ENCODE measurements at regions of chr18 and their contacts with region 1.

Region 1: DNA sequence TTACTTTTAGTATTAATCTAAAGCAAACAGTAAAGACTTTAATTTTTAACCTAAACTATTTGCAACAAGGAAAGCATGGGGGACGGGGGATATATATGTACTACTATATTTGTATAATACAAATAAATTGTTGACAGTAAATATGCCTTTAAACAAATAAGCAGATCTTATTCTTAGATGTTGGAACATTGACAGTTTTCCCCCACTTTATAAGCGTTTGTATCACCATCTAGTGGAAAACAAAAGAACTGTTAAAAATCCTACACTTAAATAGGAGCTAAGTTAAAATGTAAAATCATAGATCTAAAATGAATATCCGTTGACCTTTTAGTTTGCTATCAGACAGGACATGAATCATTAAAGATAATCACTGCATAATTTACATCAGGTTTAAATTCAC is 50.0 kb downstream of the RBBP8 start:
- DNase-seq: no peak
- H3K4me3 ChIP-seq: no peak overlapping the region
- H3K27ac ChIP-seq: no peak overlapping the region
- H3K27me3 ChIP-seq: no peaks in the 10 kb centered on the region
- CTCF ChIP-seq: peak; percentile 36 to 78 (median 60)

Region 2: DNA sequence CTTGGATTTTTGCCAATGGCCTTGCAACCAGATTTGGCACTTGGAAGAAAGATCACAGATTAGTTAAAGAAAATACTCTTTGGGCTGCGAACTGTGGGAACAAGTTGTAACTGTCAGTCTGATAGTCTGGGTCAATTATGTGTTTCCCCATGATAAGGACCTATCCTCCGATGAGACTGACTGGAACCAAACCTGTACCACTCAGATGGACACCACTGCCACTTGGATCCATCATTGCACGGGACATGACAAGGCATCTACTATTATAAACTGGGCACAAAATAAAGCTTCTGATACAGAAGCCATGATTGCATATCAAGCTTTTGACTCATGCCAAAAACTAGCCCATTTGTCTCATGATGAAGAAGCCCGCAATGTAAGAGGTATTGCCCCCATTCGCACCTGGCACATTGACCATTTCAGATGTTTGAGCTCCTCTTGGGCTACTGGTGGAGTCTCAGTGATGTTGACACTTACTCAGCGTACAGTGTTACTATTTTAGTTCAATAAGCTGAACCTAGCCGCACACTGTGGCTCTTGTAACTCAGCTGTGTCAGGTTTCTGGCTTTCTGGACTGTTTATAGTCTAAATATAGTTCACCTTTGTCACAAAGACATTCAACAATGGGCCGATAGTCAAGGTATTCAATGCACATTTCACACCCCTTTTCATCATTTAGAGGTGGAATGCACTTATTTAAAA is 229.9 kb before region 1 on chr18:
- intact Hi-C with region 1: no loop called
- DNase-seq: no peak
- H3K4me3 ChIP-seq: no peak overlapping the region
- H3K27ac ChIP-seq: no peak overlapping the region
- H3K27me3 ChIP-seq: peaks cover 0 to 3% (median 0%) of the 10 kb centered on the region in 45 donors
- CTCF ChIP-seq: no peak

Region 3: DNA sequence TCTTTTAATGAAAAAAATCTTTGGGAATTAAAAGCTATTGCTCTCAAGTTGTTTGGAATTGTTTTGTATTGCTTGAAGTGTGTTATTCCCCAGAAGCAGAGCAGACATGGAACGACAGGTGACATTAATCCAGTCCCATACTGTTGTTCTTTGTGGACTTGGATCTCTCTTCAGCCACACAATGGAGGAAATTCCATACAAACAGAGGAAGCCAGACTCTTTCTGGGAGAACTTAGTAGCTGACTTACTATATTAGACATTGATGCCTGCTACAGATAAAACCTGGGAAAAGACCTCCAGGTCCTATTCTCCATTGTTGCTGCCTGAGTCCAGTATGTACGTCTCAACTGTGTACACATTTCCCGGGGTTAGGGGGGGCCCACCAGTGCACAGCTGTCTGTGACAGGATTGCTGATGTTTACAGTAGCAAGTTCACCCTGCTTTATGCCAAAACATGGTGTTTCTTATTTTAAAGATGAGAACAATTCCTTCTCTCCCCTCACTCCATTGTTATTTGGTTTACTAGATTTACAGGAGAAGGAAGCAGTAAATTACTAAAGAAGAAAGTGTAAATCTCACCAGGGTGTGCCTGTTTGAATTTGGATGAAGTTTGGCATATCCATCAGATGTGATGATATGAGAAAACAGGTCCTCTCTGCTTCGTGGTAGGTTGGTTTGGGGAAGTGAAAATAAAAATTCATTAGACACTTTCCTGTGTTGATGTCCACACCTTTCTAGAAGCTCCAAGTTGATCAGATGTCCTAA is 192.4 kb before region 1 on chr18:
- intact Hi-C with region 1: loop called in 1 of 2 experiments (anchors 10 kb)
- DNase-seq: no peak
- H3K4me3 ChIP-seq: no peak overlapping the region
- H3K27ac ChIP-seq: no peak overlapping the region
- H3K27me3 ChIP-seq: peaks cover 0 to 12% (median 0%) of the 10 kb centered on the region in 45 donors
- CTCF ChIP-seq: no peak

Region 4: DNA sequence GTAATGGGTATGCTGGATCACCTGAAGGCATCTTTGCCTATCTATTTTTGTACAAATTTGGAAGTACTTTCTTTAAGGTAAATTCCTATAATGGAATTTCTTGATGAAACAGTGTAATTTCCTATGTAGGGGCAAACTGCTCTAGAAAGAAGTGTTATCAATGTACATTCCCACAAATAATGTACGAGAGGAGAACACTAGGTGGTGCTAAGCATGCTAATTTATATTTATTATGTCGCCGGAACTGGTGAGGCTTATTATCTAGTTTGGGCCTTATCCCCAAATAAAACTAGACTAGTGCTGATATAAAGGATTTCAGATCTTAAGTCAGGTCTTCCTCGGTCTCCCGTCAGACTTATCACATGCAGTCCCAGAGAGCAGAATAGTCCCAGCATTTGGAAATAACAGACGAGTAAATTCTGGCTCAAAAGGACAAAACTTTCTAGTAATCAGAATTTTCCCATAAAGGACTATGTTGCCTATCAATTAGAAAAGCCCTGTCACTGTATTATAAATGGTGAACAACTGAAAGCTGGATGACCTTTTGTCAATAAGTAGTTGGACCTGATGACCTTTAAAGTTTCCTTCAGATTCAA is 137.0 kb before region 1 on chr18:
- intact Hi-C with region 1: loop called in 1 of 2 experiments (anchors 10 kb)
- DNase-seq: no peak
- H3K4me3 ChIP-seq: no peak overlapping the region
- H3K27ac ChIP-seq: no peak overlapping the region
- H3K27me3 ChIP-seq: no peaks in the 10 kb centered on the region
- CTCF ChIP-seq: peak in 54 of 56 donors; percentile 13 to 65 (median 41)

Region 5: DNA sequence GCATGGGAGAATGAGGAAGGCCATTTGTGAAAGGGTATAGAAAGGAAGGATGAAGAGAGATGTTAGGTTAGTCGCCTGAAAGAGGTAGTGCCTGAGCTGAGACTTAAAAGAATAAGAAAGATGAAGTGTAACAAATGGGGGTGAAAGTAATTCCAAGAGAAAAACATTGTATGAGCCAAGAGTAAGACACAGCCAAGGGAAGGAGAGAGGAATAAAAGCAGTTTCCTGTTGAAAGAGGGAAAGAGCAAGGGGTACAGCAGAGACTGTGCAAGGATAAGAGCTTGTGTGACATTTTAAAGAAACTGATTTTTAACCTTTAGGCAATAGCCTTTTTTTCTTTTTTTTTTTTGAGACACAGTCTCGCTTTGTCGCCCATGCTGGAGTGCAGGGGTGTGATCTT is 54.8 kb before region 1 on chr18:
- intact Hi-C with region 1: loop called in 1 of 2 experiments (anchors 2 kb)
- DNase-seq: no peak
- H3K4me3 ChIP-seq: no peak overlapping the region
- H3K27ac ChIP-seq: no peak overlapping the region
- H3K27me3 ChIP-seq: no peaks in the 10 kb centered on the region
- CTCF ChIP-seq: no peak

Measured in dorsolateral prefrontal cortex (tissue), 120 donors.